AG04449 (cell line): ENCODE measurements at regions of chr13 and their contacts with region 1.

Region 1: GRCh38 chr13:78147905-78148304 is 229.3 kb upstream of the EDNRB start:
- DNase-seq: no peak
- H3K4me3 ChIP-seq: no peak overlapping the region
- CTCF ChIP-seq: no peak

Region 2: DNA sequence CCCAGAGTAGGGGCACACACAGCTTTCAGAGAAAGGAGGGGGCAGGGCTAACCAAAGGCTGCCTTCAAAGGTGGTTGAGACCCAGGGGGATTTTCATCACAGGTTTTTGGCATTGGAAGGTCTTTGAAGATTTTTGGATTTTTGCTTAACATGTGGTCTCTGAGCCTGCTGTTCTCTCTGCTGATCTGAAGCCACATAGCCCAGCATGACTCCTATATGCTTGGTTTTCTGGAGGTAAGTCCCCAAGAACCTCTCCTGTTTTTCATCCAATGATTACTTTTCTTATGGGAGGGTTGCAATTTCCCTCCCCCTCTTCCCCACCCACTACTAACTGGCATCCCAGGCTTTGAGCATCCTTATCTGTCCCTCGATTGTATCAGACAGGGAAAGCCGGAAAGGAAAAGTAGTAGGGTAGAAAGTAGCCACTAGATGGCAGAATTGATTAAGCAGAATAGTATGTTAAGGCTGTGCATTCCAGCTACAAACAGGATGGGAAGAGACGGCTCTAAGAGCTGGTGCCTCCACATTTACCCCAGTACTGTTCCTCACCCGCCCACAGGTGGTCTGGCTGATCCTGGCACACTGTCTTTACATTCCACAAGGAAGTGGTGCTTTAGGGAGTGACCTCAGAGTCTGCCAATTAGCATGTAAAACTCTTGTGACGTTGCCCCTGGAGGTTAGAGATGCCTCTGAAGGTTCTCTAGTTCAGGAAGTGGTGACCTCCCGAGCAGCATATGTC is 10.3 kb before region 1 on chr13:
- CTCF ChIA-PET with region 1: interaction called, 12 read pairs
- POLR2A ChIA-PET with region 1: no interaction called
- DNase-seq: peak; percentile 14
- H3K4me3 ChIP-seq: no peak overlapping the region
- CTCF ChIP-seq: peak; percentile 58